GM12878 (cell line): ENCODE measurements at regions of chr16 and their contacts with region 1.

Region 1: DNA sequence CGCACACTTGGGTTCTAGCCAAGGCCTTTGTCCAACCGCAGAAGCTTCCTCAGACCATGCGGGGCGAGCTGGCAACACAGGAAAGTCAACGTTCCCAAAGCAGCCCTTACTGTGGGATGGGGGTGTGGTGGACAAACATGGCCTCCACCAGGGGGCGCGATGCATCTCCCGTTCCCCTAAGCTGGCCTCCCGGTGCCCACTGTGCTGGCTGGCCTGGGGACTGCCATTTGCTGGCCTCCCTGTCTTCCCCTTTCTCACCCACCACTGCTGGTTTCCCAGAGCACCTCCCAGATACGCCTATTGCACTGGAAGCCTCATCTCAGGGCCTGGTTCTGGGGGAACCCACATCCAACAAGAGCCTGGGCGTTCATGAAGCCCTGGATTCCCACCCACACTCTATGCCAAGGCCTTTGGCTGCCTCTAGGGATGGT is 145.3 kb downstream of the IRF8 start:
- DNase-seq: no peak
- ATAC-seq: peak; percentile 84
- H3K4me3 ChIP-seq: no peak overlapping the region
- H3K27ac ChIP-seq: no peak overlapping the region
- H3K4me1 ChIP-seq: no peaks in the 10 kb centered on the region
- H3K27me3 ChIP-seq: peaks cover 3 to 5% of the 10 kb centered on the region in 2 experiments; a peak in 2 of 4 replicates
- CTCF ChIP-seq: peak; percentile 45 to 77 (median 63)
- EP300 ChIP-seq: no peak
- POLR2A ChIP-seq: no peak
- RAD21 ChIP-seq: peak; percentile 23

Region 2: GRCh38 chr16:86519649-86520316 is 475.5 kb after region 1 on chr16:
- CTCF ChIA-PET with region 1: interaction called, 6 read pairs
- POLR2A ChIA-PET with region 1: no interaction called
- RAD21 ChIA-PET with region 1: interaction called, 5 read pairs
- SMC1A ChIA-PET with region 1: no interaction called
- in situ Hi-C with region 1: loop called (anchors 10 kb)
- intact Hi-C with region 1: loop called (anchors 10 kb)
- DNase-seq: no peak
- ATAC-seq: peak; percentile 76
- H3K4me3 ChIP-seq: no peak overlapping the region
- H3K27ac ChIP-seq: no peak overlapping the region
- H3K4me1 ChIP-seq: no peaks in the 10 kb centered on the region
- H3K27me3 ChIP-seq: peaks cover 5 to 9% of the 10 kb centered on the region in 2 experiments
- CTCF ChIP-seq: peak; percentile 86 to 92 (median 87)
- EP300 ChIP-seq: no peak
- POLR2A ChIP-seq: no peak
- RAD21 ChIP-seq: peak; percentile 79